Heart left ventricle (tissue), 16 donors: ENCODE measurements at regions of chr18 and their contacts with region 1.

Region 1: DNA sequence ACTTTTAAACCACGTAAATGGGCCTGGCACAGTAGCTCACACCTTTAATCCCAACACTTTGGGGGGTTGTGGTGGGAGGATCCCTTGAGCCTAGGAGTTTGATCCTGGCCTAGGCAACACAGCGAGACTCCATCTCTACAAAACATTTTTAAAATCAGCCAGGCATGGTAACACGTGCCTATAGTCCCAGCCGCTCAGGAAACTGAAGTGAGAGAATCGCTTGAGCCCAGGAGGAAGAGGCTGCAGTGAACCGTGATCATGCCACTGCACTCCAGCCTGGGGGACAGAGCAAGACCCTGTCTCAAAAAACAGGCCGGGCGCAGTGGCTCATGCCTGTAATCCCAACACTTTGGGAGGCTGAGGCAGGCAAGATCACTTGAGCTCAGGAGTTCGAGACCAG is 12.2 kb downstream of the ROCK1 start:
- DNase-seq: no peak
- ATAC-seq: peak in 1 of 4 donors; percentile 9
- H3K4me3 ChIP-seq: no peak overlapping the region
- H3K27ac ChIP-seq: no peak overlapping the region
- H3K4me1 ChIP-seq: peaks cover 0 to 59% (median 31%) of the 10 kb centered on the region in 12 donors
- H3K27me3 ChIP-seq: no peaks in the 10 kb centered on the region
- CTCF ChIP-seq: no peak
- POLR2A ChIP-seq: no peak

Region 2: DNA sequence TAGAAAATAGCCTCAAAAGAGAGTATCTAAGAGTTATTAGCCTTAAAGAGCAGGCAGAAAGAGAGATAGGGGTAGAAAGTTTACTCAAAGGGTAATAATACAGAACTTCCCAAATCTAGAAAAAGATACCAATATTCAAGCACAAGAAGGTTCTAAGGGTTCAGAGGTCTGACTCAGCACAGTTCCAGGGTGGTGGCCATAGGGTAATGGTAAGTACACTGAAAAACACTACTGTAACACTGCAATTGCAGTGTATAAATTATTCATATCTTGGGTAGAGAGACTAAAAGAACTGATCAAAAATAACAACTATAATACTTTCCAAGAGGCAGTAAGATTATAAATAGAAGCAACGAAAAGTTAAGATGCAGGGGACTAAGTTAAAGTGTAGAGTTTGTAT is 103.0 kb before region 1 on chr18:
- intact Hi-C with region 1: loop called in 3 of 10 experiments (anchors 5 to 10 kb)
- DNase-seq: no peak
- ATAC-seq: no peak
- H3K4me3 ChIP-seq: no peak overlapping the region
- H3K27ac ChIP-seq: no peak overlapping the region
- H3K4me1 ChIP-seq: peaks cover 0 to 16% (median 0%) of the 10 kb centered on the region in 12 donors
- H3K27me3 ChIP-seq: no peaks in the 10 kb centered on the region
- CTCF ChIP-seq: no peak
- POLR2A ChIP-seq: no peak

Region 3: DNA sequence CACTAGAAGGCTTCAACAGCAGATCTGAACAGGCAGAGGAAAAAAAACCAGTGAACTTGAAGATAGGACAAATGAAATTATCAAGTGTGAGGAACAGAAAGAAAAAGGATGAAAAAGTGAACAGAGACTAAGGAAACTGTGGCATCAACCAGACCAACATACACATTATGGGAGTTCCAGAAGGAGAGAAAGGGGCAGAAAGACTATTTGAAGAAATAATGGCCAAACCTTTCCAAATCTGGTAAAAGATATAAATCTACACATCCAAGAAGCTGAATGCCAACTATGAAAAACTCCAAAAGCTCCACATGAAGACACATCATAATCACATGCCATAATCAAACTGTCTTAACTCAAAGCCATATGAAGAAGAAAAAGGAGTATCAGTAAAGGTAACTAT is 67.6 kb before region 1 on chr18:
- intact Hi-C with region 1: loop called in 2 of 10 experiments (anchors 10 kb)
- DNase-seq: no peak
- ATAC-seq: no peak
- H3K4me3 ChIP-seq: no peak overlapping the region
- H3K27ac ChIP-seq: no peak overlapping the region
- H3K4me1 ChIP-seq: no peaks in the 10 kb centered on the region
- H3K27me3 ChIP-seq: no peaks in the 10 kb centered on the region
- CTCF ChIP-seq: no peak
- POLR2A ChIP-seq: no peak

Region 4: GRCh38 chr18:21134898-21135297 is 35.5 kb after region 1 on chr18:
- intact Hi-C with region 1: no loop called
- DNase-seq: no peak
- ATAC-seq: peak in 2 of 4 donors; percentile 51 to 54
- H3K4me3 ChIP-seq: no peak overlapping the region
- H3K27ac ChIP-seq: no peak overlapping the region
- H3K4me1 ChIP-seq: peaks cover 0 to 8% (median 0%) of the 10 kb centered on the region in 12 donors
- H3K27me3 ChIP-seq: no peaks in the 10 kb centered on the region
- CTCF ChIP-seq: peak in 11 of 12 donors; percentile 17 to 58 (median 38)
- POLR2A ChIP-seq: no peak